H1 (cell line): ENCODE measurements at regions of chr1 and their contacts with region 1.

Region 1: GRCh38 chr1:202154766-202155477 is 5.5 kb downstream of the PTPN7 start:
- DNase-seq: peak; percentile 39 to 77
- H3K4me3 ChIP-seq: no peak overlapping the region
- H3K27ac ChIP-seq: no peak overlapping the region
- H3K4me1 ChIP-seq: peaks cover 0 to 9% (median 5%) of the 10 kb centered on the region in 4 experiments; a peak in 3 of 7 replicates
- H3K27me3 ChIP-seq: no peaks in the 10 kb centered on the region
- CTCF ChIP-seq: peak; percentile 67 to 84 (median 69)
- EP300 ChIP-seq: no peak
- POLR2A ChIP-seq: no peak
- RAD21 ChIP-seq: peak; percentile 57 to 65

Region 2: GRCh38 chr1:202112839-202113672 is 41.9 kb before region 1 on chr1:
- CTCF ChIA-PET with region 1: interaction called, 13 read pairs
- POLR2A ChIA-PET with region 1: no interaction called
- DNase-seq: no peak
- H3K4me3 ChIP-seq: no peak overlapping the region
- H3K27ac ChIP-seq: no peak overlapping the region
- H3K4me1 ChIP-seq: peaks cover 2 to 9% (median 4%) of the 10 kb centered on the region in 4 experiments
- H3K27me3 ChIP-seq: no peaks in the 10 kb centered on the region
- CTCF ChIP-seq: no peak
- EP300 ChIP-seq: no peak
- POLR2A ChIP-seq: no peak
- RAD21 ChIP-seq: no peak

Region 3: GRCh38 chr1:202135221-202135721 is 19.7 kb before region 1 on chr1:
- CTCF ChIA-PET with region 1: interaction called, 21 read pairs
- POLR2A ChIA-PET with region 1: interaction called, 3 read pairs
- DNase-seq: peak in 1 of 2 experiments; percentile 69
- H3K4me3 ChIP-seq: no peak overlapping the region
- H3K27ac ChIP-seq: 0 out of 2 replicates have a peak overlapping the region, but pooled peaks have one; percentile 17
- H3K4me1 ChIP-seq: peaks cover 0 to 11% (median 4%) of the 10 kb centered on the region in 4 experiments; a peak in 3 of 7 replicates
- H3K27me3 ChIP-seq: no peaks in the 10 kb centered on the region; a peak in 1 of 7 replicates
- CTCF ChIP-seq: peak in 2 of 3 experiments; percentile 84 to 87; a peak in 3 of 4 replicates
- EP300 ChIP-seq: no peak
- POLR2A ChIP-seq: no peak
- RAD21 ChIP-seq: peak; percentile 77 to 81

Region 4: GRCh38 chr1:202144402-202145067 is 10.4 kb before region 1 on chr1 and contains the start of gene ARL8A:
- CTCF ChIA-PET with region 1: interaction called, 50 read pairs
- POLR2A ChIA-PET with region 1: interaction called, 6 read pairs
- DNase-seq: peak in 1 of 2 experiments; percentile 83
- H3K4me3 ChIP-seq: peak within 1 kb of the TSS; percentile 62 to 78 (median 72)
- H3K27ac ChIP-seq: peak within 1 kb of the TSS; percentile 67; the same call in 1 of the 2 replicates
- H3K4me1 ChIP-seq: peaks cover 3 to 13% (median 9%) of the 10 kb centered on the region in 4 experiments; a peak in 6 of 7 replicates
- H3K27me3 ChIP-seq: peaks cover 0 to 7% (median 2%) of the 10 kb centered on the region in 4 experiments; a peak in 3 of 7 replicates
- CTCF ChIP-seq: no peak
- EP300 ChIP-seq: no peak
- POLR2A ChIP-seq: no peak
- RAD21 ChIP-seq: no peak
- total RNA-seq, gene ARL8A: 58.7 and 59.0 TPM in 2 replicates

Region 5: GRCh38 chr1:202176949-202177927 is 22.3 kb after region 1 on chr1:
- CTCF ChIA-PET with region 1: interaction called, 22 read pairs
- POLR2A ChIA-PET with region 1: interaction called, 3 read pairs
- DNase-seq: no peak
- H3K4me3 ChIP-seq: no peak overlapping the region
- H3K27ac ChIP-seq: no peak overlapping the region
- H3K4me1 ChIP-seq: no peaks in the 10 kb centered on the region; a peak in 1 of 7 replicates
- H3K27me3 ChIP-seq: no peaks in the 10 kb centered on the region
- CTCF ChIP-seq: peak; percentile 41 to 51 (median 44)
- EP300 ChIP-seq: no peak
- POLR2A ChIP-seq: no peak
- RAD21 ChIP-seq: peak in 1 of 2 experiments; percentile 27; a peak in 1 of 4 replicates

Region 6: GRCh38 chr1:202184750-202185460 is 30.0 kb after region 1 on chr1:
- CTCF ChIA-PET with region 1: interaction called, 23 read pairs
- POLR2A ChIA-PET with region 1: interaction called, 3 read pairs
- DNase-seq: peak; percentile 97 to 99
- H3K4me3 ChIP-seq: no peak overlapping the region
- H3K27ac ChIP-seq: no peak overlapping the region
- H3K4me1 ChIP-seq: peaks cover 0 to 6% (median 4%) of the 10 kb centered on the region in 4 experiments; a peak in 5 of 7 replicates
- H3K27me3 ChIP-seq: no peaks in the 10 kb centered on the region; a peak in 3 of 7 replicates
- CTCF ChIP-seq: peak; percentile 89 to 99 (median 97)
- EP300 ChIP-seq: no peak
- POLR2A ChIP-seq: no peak
- RAD21 ChIP-seq: peak; percentile 79 to 84

Region 7: GRCh38 chr1:202199265-202199889 is 44.5 kb after region 1 on chr1:
- CTCF ChIA-PET with region 1: no interaction called
- POLR2A ChIA-PET with region 1: no interaction called
- DNase-seq: no peak
- H3K4me3 ChIP-seq: no peak overlapping the region
- H3K27ac ChIP-seq: no peak overlapping the region
- H3K4me1 ChIP-seq: no peaks in the 10 kb centered on the region
- H3K27me3 ChIP-seq: peaks cover 4 to 16% (median 9%) of the 10 kb centered on the region in 4 experiments
- CTCF ChIP-seq: no peak
- EP300 ChIP-seq: no peak
- POLR2A ChIP-seq: no peak
- RAD21 ChIP-seq: no peak

Region 8: GRCh38 chr1:202213361-202214088 is 58.6 kb after region 1 on chr1:
- CTCF ChIA-PET with region 1: interaction called, 16 read pairs
- POLR2A ChIA-PET with region 1: interaction called, 3 read pairs
- DNase-seq: peak in 1 of 2 experiments; percentile 60
- H3K4me3 ChIP-seq: peak overlapping the region; percentile 60 to 74 (median 62)
- H3K27ac ChIP-seq: no peak overlapping the region
- H3K4me1 ChIP-seq: peaks cover 0 to 3% (median 1%) of the 10 kb centered on the region in 4 experiments; a peak in 5 of 7 replicates
- H3K27me3 ChIP-seq: peaks cover 2 to 10% (median 8%) of the 10 kb centered on the region in 4 experiments; a peak in 6 of 7 replicates
- CTCF ChIP-seq: peak; percentile 72 to 97 (median 88)
- EP300 ChIP-seq: no peak
- POLR2A ChIP-seq: no peak
- RAD21 ChIP-seq: peak; percentile 52 to 69

Region 9: DNA sequence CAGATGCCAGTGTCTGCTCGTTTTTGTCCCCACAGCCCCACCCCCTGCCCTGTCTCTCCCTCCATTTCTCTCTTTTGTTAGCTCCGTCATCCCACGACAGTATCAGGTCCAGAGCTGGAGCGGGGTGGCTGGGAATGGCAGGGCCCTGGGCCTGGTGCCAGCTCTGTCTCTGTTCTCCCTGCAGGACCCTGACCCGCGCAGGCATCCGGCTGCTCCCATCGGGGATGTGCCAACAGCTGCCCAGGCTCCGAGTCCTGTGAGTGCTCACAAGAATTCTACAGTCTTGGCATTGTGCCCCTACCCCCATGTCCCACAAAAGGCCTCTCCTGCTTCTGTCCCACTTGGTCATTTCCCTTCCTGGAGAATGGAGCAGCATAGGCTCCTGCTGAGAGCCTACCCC is 149.5 kb after region 1 on chr1:
- CTCF ChIA-PET with region 1: no interaction called
- POLR2A ChIA-PET with region 1: no interaction called
- DNase-seq: no peak
- H3K4me3 ChIP-seq: no peak overlapping the region
- H3K27ac ChIP-seq: no peak overlapping the region
- H3K4me1 ChIP-seq: no peaks in the 10 kb centered on the region
- H3K27me3 ChIP-seq: no peaks in the 10 kb centered on the region; a peak in 1 of 7 replicates
- CTCF ChIP-seq: no peak
- EP300 ChIP-seq: no peak
- POLR2A ChIP-seq: no peak
- RAD21 ChIP-seq: no peak